PC-9 (cell line): ENCODE measurements at regions of chr11 and their contacts with region 1.

Region 1: DNA sequence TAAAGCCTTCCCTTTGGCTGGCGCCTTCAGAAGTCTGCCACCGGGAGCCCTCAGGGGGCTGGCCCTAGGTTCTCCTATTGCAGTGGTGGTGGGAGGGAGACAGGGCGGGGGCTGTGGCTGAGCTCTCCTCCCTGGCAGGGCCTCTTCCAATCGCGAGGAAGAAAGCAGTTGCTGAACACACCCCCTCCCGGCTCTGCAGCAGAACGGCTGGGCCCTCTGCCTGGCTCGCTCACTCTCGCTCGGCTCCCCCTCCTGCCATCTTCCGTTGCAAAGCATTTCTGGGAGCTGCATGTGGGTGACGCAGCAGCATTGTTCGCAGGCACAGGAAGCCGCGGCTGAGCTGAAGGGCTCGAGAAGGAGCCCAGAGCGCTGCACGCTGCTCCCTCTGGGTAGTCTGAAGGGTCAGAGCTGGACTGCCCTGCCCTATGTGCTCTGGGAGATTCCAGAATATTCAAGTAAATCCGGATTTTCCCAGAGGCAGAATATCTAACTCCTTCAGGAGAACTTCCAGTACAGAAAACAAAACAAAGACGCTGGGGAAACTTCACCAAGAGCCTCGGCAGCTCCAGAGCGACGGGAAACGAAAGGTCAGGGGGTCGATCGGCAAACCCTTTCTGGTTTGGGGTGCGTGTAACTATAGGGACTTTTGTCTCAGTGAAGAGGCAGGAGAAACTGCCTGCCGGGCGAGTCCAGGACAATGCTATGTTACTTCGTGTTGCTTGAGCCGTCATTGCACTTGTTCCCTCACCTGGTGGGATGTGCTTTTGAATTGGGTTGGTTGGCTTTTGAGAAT is 26.3 kb upstream of the GRK2 start:
- DNase-seq: peak; percentile 99
- H3K4me3 ChIP-seq: peak overlapping the region; percentile 82
- H3K27ac ChIP-seq: peak overlapping the region; percentile 80
- H3K4me1 ChIP-seq: peaks cover 54% of the 10 kb centered on the region
- H3K27me3 ChIP-seq: no peaks in the 10 kb centered on the region
- CTCF ChIP-seq: no peak

Region 2: GRCh38 chr11:67022328-67022927 is 217.6 kb before region 1 on chr11:
- CTCF ChIA-PET with region 1: no interaction called
- POLR2A ChIA-PET with region 1: interaction called, 15 read pairs
- intact Hi-C with region 1: no loop called
- DNase-seq: peak; percentile 86 to 95
- H3K4me3 ChIP-seq: peak overlapping the region; percentile 80
- H3K27ac ChIP-seq: peak overlapping the region; percentile 50
- H3K4me1 ChIP-seq: peaks cover 44% of the 10 kb centered on the region
- H3K27me3 ChIP-seq: no peaks in the 10 kb centered on the region
- CTCF ChIP-seq: no peak

Region 3: DNA sequence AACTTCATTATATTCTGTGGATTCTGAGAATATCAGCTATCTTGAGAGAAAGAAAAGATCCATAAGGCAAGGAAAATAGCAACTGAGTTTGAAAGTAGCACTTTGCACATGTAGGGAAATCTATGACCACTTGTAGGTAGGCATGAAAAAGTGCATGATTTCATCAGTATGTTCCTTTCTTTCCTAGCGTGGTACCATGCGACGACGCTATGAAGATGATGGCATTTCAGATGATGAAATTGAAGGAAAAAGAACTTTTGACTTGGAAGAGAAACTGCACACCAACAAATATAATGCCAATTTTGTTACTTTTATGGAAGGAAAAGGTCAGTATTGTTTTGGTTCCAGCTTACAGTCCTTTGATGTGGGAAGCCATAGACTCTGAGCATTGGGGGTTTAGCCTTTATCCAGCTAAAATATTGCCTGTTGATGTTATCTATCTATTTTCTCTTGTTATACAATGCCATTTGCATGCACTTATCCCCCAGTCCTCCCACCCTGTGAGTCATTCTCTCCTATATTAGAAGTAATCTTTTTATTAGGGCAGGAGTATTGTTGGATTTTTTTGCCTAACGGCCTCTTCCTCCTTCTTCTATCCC is 60.0 kb before region 1 on chr11:
- CTCF ChIA-PET with region 1: no interaction called
- POLR2A ChIA-PET with region 1: no interaction called
- intact Hi-C with region 1: no loop called
- DNase-seq: no peak
- H3K4me3 ChIP-seq: no peak overlapping the region
- H3K27ac ChIP-seq: no peak overlapping the region
- H3K4me1 ChIP-seq: no peaks in the 10 kb centered on the region
- H3K27me3 ChIP-seq: no peaks in the 10 kb centered on the region
- CTCF ChIP-seq: no peak

Region 4: DNA sequence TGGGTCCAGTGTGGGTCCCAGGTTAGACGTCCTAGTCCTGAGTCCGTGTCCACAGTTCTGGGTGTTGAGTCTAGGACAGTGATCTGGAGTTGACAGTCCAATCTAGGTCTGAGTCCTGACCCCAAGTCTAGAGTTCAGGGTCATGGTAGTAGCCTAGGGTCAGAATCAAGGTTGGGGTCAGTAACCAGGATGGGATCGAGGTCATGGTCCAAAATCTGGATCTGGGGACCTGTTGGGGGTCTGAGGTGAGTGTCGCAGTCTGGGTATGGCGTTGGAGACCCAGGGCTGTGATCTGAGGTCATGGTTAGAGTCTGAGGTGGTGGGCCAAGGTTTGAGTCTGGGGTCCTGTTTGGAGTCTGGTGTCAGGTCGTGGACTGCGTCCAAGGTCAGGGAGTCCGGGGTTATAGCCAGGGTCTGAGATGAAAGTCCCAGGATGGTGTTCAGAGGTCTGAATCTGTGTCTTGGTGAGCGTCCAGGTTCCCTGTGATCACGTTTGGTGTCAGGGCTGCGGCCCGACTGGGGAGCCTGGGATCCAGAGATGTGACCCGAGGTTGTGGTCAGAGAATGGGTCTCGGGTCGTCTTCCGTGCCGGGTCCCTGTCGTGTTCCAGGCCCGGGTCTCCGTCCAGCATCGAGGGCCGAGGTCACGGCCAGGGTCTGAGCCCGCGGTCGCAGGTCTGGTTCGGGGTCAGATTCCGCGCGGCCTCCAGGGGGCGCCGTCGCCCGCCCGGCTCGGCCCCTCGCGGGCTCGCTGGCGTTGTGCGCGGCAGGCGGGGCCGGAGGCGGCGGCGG is 25.8 kb after region 1 on chr11:
- CTCF ChIA-PET with region 1: interaction called, 11 read pairs
- POLR2A ChIA-PET with region 1: interaction called, 3 read pairs
- intact Hi-C with region 1: loop called (anchors 2 kb)
- DNase-seq: peak in 1 of 2 experiments; percentile 88
- H3K4me3 ChIP-seq: peak overlapping the region; percentile 32; the same call in 1 of the 2 replicates
- H3K27ac ChIP-seq: no peak overlapping the region
- H3K4me1 ChIP-seq: peaks cover 38% of the 10 kb centered on the region
- H3K27me3 ChIP-seq: no peaks in the 10 kb centered on the region
- CTCF ChIP-seq: peak; percentile 77

Region 5: DNA sequence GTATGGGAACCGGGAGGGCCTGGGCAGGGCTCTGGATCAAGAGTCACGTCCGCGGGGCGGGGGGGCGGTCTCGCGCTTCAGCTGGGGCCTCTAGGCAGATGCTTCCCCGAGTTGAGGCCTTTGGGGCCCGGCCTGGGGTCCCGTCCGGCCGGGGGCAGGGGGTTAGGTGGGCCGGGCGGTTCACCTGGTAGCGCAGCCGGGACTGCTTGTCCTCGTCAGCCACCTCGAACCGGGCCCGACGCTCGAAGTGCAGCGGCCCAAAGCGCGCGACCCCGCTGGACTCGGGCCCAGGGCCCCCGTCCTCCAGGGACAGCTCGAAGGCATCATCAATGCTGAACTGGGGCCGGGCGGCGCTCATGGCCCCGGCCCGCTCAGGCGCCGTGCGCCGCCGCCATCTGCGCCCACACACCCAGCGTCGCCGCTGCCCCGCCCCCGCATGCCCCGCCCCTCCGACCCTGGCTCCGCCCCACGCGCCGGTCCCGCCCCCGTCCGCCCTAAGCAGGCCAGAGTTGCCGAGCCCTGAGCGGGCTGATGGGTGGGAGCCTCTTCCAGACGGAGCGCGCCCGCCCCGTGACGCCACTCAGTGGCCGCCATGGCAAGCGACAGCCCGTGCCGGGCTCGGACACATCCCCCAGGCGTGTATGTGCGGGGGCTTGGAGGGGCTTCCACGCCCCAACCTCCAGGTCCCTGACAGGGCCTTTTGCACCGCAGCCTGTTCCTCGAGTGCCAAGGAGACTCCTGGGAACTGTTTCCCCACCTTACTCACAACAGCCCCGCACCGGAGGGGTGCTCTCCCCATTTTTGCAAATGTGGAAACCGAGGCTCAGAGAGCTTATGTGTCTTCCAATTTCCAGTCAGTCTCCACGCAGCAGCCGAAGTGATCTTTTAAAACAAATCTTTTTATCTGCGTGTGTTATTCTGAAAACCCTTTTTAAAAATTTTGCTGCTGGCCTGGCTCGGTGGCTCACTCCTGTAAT is 229.1 kb after region 1 on chr11 and contains the start of gene TMEM134:
- CTCF ChIA-PET with region 1: no interaction called
- POLR2A ChIA-PET with region 1: interaction called, 19 read pairs
- intact Hi-C with region 1: no loop called
- DNase-seq: peak; percentile 80 to 91
- H3K4me3 ChIP-seq: peak within 1 kb of the TSS; percentile 92
- H3K27ac ChIP-seq: peak within 1 kb of the TSS; percentile 48
- H3K4me1 ChIP-seq: peaks cover 32% of the 10 kb centered on the region
- H3K27me3 ChIP-seq: no peaks in the 10 kb centered on the region
- CTCF ChIP-seq: peak; percentile 48
- total RNA-seq, gene TMEM134: 85.7 and 125 TPM in 2 replicates

Region 6: GRCh38 chr11:67656278-67656922 is 416.4 kb after region 1 on chr11:
- CTCF ChIA-PET with region 1: no interaction called
- POLR2A ChIA-PET with region 1: interaction called, 11 read pairs
- intact Hi-C with region 1: no loop called
- DNase-seq: no peak
- H3K4me3 ChIP-seq: no peak overlapping the region
- H3K27ac ChIP-seq: no peak overlapping the region
- H3K4me1 ChIP-seq: no peaks in the 10 kb centered on the region
- H3K27me3 ChIP-seq: no peaks in the 10 kb centered on the region
- CTCF ChIP-seq: no peak

Region 7: DNA sequence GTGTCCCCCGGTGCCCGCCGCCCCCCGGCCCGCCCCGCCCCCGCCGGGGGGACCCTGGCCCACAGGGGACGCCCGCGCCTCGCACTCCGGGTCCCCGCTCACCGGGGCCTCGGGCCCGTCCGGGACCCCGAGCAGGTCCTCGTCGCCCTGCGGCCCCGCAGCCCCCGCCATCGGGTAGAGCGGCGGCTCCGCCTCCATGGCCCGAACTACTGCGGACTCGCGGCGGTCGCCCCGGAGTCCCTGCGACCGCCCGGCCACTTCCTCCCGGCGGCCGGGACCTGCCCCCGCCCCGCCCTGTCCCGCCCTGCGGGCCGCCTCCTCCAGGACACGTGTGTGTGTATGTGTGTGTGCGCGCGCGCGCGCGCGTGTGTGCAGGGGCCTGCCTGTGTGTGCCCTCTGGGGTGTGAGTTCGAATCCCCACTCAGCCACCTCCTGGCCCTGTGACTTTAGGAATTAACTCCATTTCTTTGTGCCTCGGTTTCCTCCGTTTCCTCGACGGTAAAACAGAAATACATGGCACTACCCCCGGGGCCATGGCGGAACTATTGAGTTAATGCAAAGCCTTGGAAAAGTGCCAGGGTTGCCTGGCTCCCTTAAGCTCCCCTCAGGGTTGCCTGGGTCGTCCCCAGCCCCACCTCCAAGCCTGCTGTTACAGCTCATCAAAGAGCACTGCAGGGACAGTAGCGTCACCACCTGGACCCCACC is 764.0 kb after region 1 on chr11 and contains the start of gene UNC93B1:
- CTCF ChIA-PET with region 1: no interaction called
- POLR2A ChIA-PET with region 1: no interaction called
- intact Hi-C with region 1: no loop called
- DNase-seq: peak; percentile 83 to 92
- H3K4me3 ChIP-seq: peak within 1 kb of the TSS; percentile 68
- H3K27ac ChIP-seq: no peak within 1 kb of the TSS
- H3K4me1 ChIP-seq: peaks cover 12% of the 10 kb centered on the region
- H3K27me3 ChIP-seq: no peaks in the 10 kb centered on the region
- CTCF ChIP-seq: no peak
- total RNA-seq, gene UNC93B1: 75.5 and 94.4 TPM in 2 replicates